Gastrocnemius medialis (tissue), 4 donors: ENCODE measurements at regions of chr14 and their contacts with region 1.

Region 1: DNA sequence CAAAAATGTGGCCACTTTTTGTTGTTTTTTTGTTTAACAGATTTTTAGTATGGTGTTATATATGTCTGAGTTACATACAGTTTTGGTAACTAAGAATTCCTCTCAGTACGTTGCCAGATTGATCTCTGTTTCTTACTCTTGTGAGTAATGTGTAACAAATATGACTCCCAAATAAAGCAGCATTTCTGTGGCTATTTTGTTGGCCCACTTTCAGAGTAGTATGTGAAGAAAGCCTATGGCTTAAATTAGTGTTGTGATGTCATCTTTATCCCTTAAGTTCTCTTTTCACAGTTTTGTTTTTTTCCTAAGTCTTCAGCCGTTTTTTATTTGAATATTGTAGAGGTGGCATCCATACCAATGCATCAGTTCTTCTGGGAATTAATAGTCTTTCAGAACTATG is 10.7 kb downstream of the PCNX4 start:
- DNase-seq: no peak
- ATAC-seq: no peak
- H3K4me3 ChIP-seq: peak overlapping the region in 2 of 4 donors; percentile 2 to 29
- H3K27ac ChIP-seq: peak overlapping the region; percentile 24 to 59 (median 58)
- H3K4me1 ChIP-seq: peaks cover 55 to 64% of the 10 kb centered on the region in 2 donors
- H3K27me3 ChIP-seq: no peaks in the 10 kb centered on the region
- CTCF ChIP-seq: no peak
- POLR2A ChIP-seq: no peak

Region 2: GRCh38 chr14:60151715-60152114 is 49.3 kb after region 1 on chr14:
- in situ Hi-C with region 1: no loop called
- intact Hi-C with region 1: loop called (anchors 2 kb)
- DNase-seq: peak; percentile 88 to 96
- ATAC-seq: peak; percentile 98 to 99
- H3K4me3 ChIP-seq: no peak overlapping the region
- H3K27ac ChIP-seq: peak overlapping the region; percentile 97 to 100 (median 99)
- H3K4me1 ChIP-seq: peaks cover 48 to 50% of the 10 kb centered on the region in 2 donors
- H3K27me3 ChIP-seq: no peaks in the 10 kb centered on the region
- CTCF ChIP-seq: no peak
- POLR2A ChIP-seq: peak; percentile 38 to 39